Astrocyte of the cerebellum (primary cell): ENCODE measurements at regions of chr5 and their contacts with region 1.

Region 1: DNA sequence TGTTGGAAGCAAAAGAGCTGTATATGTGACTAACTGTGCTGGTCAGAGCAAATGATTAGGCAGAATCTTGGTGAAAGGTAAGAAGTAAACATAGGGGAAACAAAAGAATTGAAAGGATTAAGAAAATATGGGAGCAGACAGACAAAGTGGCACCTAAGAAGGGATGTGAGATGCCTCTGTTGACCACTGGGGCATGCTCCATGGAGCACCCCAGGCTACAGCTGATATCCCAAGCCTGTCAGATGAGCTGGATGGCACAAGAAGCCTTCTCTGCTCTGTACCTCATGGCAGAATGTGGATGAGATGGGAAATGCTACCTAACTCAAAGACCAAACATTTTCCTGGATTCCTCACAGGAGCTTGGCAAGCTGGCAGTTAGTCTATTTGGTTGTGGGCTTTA is 89.3 kb upstream of the SLIT3 start:
- DNase-seq: no peak
- H3K4me3 ChIP-seq: no peak overlapping the region
- CTCF ChIP-seq: no peak

Region 2: DNA sequence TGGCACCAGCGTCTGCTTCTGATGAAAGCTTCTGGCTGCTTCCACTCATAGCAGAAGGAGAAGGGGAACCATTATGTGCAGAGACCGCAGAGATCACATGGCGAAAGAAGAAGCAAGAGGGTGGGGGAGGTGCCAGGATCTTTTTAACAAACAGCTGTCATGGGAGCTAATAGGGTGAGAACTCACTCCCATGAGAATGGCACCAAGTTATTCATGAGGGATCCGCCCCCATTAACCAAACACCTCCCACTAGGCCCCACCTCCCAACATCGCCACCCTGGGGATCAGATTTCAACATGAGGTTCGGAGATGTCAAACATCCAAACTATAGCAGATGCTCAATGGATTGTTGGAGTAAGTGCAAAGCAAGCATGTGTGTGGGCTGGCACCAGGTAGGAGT is 36.5 kb after region 1 on chr5:
- in situ Hi-C with region 1: loop called (anchors 5 kb)
- DNase-seq: no peak
- H3K4me3 ChIP-seq: no peak overlapping the region
- CTCF ChIP-seq: no peak

Region 3: DNA sequence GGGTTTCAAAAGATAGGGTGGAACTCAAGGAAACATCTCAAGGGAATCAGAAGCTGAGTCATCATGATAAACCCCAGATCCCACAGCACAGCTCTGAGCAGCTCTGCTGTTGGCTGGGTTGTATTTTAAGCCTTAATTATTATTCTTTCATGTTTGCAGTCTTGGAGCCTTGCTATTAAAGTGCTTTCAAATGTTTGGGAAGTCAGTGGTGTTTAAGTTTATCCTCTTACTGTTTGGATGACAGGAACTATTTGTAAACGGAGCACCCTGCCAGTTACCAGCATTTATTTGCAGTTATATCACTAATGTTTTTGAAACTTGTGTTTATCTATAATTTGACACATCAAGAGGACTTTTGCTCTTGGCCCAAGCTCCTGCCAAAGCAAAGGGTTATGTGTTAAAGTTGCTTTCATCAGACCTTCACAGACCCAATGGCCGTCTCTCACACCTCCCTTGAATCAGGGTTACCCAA is 52.2 kb after region 1 on chr5:
- in situ Hi-C with region 1: no loop called
- DNase-seq: no peak
- H3K4me3 ChIP-seq: no peak overlapping the region
- CTCF ChIP-seq: no peak

Region 4: GRCh38 chr5:169474226-169474625 is 84.0 kb after region 1 on chr5:
- in situ Hi-C with region 1: no loop called
- DNase-seq: peak; percentile 8
- H3K4me3 ChIP-seq: no peak overlapping the region
- CTCF ChIP-seq: no peak

Region 5: DNA sequence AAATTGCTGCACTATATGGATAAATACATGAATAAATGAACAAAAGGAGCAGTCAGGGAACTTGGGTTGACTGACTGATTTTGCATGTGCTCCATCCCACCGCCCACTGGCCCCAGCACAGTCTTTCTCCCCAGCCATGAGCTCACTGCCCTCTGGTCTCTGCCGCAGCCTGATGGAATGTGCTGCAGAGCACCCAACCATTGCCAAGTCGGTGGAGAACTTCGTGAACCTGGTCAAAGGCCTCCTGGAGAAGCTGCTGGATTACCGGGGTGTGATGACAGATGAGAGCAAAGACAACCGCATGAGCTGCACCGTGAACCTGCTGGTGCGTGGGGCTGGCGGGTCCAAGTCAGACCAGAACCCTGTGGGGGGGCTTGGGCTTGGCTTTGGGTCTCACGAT is 644.0 kb after region 1 on chr5:
- in situ Hi-C with region 1: no loop called
- DNase-seq: no peak
- H3K4me3 ChIP-seq: no peak overlapping the region
- CTCF ChIP-seq: no peak